Mammary epithelial cell (primary cell): ENCODE measurements at regions of chr9 and their contacts with region 1.

Region 1: GRCh38 chr9:131739980-131740648 is at the start of gene RAPGEF1:
- DNase-seq: no peak
- H3K4me3 ChIP-seq: peak within 1 kb of the TSS; percentile 66 to 83 (median 71)
- H3K27ac ChIP-seq: peak within 1 kb of the TSS; percentile 57
- H3K4me1 ChIP-seq: peaks cover 11% of the 10 kb centered on the region
- H3K27me3 ChIP-seq: no peaks in the 10 kb centered on the region
- CTCF ChIP-seq: peak; percentile 72 to 76
- total RNA-seq, gene RAPGEF1: 41.7 to 51.3 TPM

Region 2: DNA sequence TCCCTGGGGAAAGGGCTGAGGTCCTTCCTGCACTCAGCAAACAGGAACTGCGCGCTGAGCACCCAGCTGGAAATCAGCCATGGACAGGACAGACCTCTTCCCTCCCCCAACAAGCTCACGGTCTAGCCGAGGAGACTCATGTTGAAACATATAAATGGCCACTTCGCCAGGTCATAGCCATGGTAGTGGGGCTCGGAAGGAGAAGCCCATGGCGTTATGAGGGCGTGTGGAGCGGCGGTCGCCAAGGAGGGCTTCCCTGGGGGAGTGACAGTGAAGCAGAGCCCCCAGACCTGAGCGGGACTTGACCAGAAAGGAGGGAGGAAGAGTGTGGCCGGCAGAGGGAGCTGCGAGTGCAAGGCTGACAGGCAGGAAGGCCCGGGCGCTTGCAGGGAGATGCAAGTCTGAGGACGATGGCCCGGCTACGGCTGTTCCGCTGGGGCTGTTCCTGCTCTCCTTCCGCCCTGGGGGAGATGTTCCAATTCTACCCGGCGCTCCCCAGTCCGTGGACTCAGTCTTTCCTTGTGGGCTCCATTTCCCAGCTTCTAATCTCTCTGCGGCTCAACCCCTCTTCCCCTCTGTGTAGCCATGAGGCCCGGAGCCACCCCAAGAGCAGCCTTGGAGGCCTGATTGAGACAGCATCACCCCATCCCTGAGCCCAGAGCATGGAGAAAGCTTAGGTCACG is 390.1 kb before region 1 on chr9:
- CTCF ChIA-PET with region 1: no interaction called
- dilution Hi-C with region 1: no loop called
- in situ Hi-C with region 1: loop called in 1 of 2 experiments (anchors 10 kb)
- intact Hi-C with region 1: no loop called
- DNase-seq: peak; percentile 58
- H3K4me3 ChIP-seq: peak overlapping the region in 2 of 3 experiments; percentile 21 to 41
- H3K27ac ChIP-seq: no peak overlapping the region
- H3K4me1 ChIP-seq: peaks cover 8% of the 10 kb centered on the region
- H3K27me3 ChIP-seq: no peaks in the 10 kb centered on the region
- CTCF ChIP-seq: peak; percentile 75 to 88

Region 3: DNA sequence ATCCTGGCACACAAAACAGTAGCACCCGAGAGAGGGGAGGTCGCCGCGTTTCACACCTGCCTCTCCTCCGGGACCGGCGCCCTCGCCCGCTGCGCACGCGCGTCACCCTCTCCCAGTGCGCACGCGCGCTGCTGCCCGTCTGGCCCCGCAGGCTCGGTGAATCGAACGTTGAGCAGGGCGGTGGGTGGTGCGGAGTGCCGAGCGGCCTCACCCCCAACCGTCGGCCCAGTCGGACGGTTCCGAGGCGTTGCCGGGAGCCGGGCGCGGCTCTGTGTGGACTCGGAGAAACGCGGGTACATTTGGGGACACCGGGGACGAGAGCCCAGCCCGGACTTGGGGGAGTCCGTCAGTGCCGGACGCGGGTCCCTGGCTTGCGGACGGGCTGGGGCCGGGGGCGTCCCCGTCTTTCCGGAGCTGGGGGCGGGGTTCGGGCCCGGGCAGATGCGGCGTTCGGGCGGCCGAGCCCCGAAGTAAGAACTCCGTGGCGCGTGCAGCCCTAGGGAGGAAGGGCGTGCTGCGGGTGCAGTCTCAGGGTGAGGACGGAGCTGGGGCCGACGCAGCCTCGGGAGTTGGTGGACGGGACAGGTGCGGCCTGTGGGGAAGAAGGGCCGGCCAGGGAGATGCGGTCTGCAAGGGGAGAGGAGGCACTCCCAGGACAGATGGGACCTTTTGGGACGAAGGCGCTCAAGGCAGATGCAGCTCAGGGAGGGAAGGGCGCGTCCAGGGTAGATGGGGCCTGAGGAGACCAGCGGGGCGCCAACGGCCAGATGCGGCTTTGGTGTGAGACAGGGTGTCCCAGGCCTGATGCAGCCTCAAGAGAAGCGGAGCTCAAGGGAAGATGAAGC is 237.1 kb before region 1 on chr9 and contains the start of gene POMT1:
- CTCF ChIA-PET with region 1: no interaction called
- dilution Hi-C with region 1: no loop called
- in situ Hi-C with region 1: loop called in 1 of 2 experiments (anchors 10 kb)
- intact Hi-C with region 1: loop called (anchors 5 kb)
- DNase-seq: peak; percentile 64
- H3K4me3 ChIP-seq: peak within 1 kb of the TSS; percentile 56 to 86 (median 84)
- H3K27ac ChIP-seq: no peak within 1 kb of the TSS
- H3K4me1 ChIP-seq: peaks cover 26% of the 10 kb centered on the region
- H3K27me3 ChIP-seq: no peaks in the 10 kb centered on the region
- CTCF ChIP-seq: no peak
- total RNA-seq, gene POMT1: 16.0 to 19.6 TPM

Region 4: DNA sequence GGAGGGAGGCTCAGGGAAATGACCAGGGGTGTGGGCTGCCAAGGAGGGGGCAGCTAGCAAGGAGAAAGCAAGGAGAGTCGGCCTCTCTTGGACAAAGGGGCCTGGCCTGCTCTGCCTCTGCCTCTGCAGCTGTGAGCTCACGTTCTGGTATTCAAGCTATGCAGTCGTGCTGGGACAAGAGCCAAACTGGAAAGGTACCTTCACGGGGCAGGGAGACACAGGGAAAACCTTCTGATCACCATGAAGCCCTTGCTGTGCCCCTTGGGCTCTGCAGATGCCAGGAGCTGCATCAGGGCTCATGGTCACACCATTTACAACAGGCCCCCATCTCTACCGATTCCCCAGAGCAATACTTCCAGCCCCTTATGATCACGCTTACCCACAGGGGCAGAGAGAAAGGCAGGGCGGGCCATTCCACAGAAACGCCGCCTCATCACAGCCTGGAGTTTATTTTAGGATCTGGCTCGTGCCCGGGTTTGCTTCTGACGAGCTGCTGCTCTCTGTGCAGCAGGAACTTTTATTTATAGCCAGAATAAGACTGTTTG is 131.5 kb before region 1 on chr9:
- CTCF ChIA-PET with region 1: interaction called, 3 read pairs
- dilution Hi-C with region 1: no loop called
- in situ Hi-C with region 1: loop called in 1 of 2 experiments (anchors 5 kb)
- intact Hi-C with region 1: loop called (anchors 1 kb)
- DNase-seq: peak; percentile 81
- H3K4me3 ChIP-seq: peak overlapping the region in 1 of 3 experiments; percentile 11
- H3K27ac ChIP-seq: peak overlapping the region; percentile 59
- H3K4me1 ChIP-seq: peaks cover 36% of the 10 kb centered on the region
- H3K27me3 ChIP-seq: no peaks in the 10 kb centered on the region
- CTCF ChIP-seq: no peak

Region 5: DNA sequence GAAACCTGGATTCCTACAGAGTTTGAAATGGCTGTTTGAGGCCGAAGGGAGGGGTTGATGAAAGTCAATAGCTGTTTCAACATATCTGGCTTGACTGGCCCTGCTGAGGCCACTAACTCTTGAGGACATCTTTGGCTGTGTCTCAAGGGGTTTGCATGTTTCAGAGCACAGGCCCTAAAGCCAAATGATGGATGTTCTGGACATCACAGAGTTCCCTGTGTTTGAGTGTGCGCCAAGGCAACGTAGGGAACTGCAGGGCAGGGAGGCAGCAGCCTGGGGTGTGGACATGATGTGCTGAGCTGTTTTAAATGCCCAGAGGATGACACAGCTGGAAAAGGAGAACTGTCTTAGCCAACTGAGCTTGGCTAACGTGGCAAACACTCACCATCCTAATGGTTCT is 89.9 kb before region 1 on chr9:
- CTCF ChIA-PET with region 1: no interaction called
- dilution Hi-C with region 1: no loop called
- in situ Hi-C with region 1: no loop called
- intact Hi-C with region 1: loop called (anchors 1 kb)
- DNase-seq: peak; percentile 57
- H3K4me3 ChIP-seq: no peak overlapping the region
- H3K27ac ChIP-seq: peak overlapping the region; percentile 26
- H3K4me1 ChIP-seq: peaks cover 27% of the 10 kb centered on the region
- H3K27me3 ChIP-seq: no peaks in the 10 kb centered on the region
- CTCF ChIP-seq: no peak

Region 6: DNA sequence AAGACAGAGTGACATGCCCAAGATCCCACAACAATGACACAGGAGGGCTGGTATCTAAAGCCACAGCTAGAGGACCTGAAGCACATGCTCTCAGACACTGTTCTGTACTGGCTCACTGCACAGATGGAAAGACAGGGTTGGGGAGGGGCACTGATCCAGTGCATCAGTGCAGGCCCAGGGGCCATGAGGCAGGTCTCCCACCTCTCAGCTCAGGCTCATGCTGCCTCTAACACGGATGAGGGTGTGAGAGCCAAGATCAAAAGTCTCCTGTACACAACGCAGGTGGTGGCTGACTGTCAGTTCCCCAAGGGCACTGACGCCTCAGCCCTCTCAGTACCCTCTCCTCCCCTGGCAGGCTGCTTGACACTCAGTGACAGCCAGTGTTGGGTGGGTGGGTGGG is 11.2 kb before region 1 on chr9:
- CTCF ChIA-PET with region 1: no interaction called
- dilution Hi-C with region 1: no loop called
- in situ Hi-C with region 1: no loop called
- intact Hi-C with region 1: loop called (anchors 1 kb)
- DNase-seq: no peak
- H3K4me3 ChIP-seq: no peak overlapping the region
- H3K27ac ChIP-seq: peak overlapping the region; percentile 80
- H3K4me1 ChIP-seq: peaks cover 65% of the 10 kb centered on the region
- H3K27me3 ChIP-seq: no peaks in the 10 kb centered on the region
- CTCF ChIP-seq: no peak